GM12878 (cell line): ENCODE measurements at regions of chr7 and their contacts with region 1.

Region 1: DNA sequence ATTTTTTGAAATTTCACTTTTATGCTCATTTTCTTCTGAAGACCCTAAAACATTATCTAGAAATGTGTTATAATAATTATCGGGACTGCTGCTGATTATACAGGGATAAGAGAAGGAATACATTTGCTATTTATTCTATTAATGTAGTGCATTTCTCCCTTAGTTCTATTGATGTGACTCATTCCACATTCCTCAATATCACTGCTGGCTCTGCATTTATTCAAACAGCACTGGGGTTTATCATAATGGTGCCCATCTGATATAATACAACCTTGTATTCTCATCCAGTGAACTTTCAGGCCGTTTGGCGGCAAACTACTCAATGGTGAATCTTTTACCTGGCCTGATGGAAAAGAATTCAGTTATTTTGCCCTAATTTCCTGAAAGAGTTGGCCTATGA is 7.8 kb downstream of the KCND2 start:
- DNase-seq: no peak
- ATAC-seq: no peak
- H3K4me3 ChIP-seq: no peak overlapping the region
- H3K27ac ChIP-seq: no peak overlapping the region
- H3K4me1 ChIP-seq: no peaks in the 10 kb centered on the region
- H3K27me3 ChIP-seq: no peaks in the 10 kb centered on the region
- CTCF ChIP-seq: no peak
- EP300 ChIP-seq: no peak
- POLR2A ChIP-seq: no peak
- RAD21 ChIP-seq: no peak

Region 2: DNA sequence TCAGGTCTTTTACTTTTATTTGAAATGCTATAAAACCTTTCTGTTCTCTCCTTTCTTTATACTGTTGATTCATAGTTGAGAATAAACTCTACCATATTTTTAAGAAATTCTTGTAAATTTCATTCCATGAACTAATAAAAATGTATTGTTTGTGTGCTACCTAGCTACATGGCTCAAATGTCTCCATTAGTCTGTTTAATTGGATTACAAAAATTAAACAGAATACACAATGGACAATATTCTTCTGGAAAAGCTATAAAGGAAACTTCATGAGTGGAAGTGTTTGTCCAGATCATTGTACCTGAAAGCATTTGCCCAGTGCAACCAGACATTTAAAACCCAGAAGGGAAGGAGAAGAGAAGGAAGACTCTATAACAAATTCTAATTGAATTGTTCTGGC is 12.3 kb after region 1 on chr7:
- CTCF ChIA-PET with region 1: interaction called, 10 read pairs
- POLR2A ChIA-PET with region 1: interaction called, 3 read pairs
- RAD21 ChIA-PET with region 1: interaction called, 8 read pairs
- SMC1A ChIA-PET with region 1: interaction called, 9 read pairs
- in situ Hi-C with region 1: no loop called
- intact Hi-C with region 1: no loop called
- DNase-seq: no peak
- ATAC-seq: no peak
- H3K4me3 ChIP-seq: no peak overlapping the region
- H3K27ac ChIP-seq: no peak overlapping the region
- H3K4me1 ChIP-seq: no peaks in the 10 kb centered on the region
- H3K27me3 ChIP-seq: no peaks in the 10 kb centered on the region
- CTCF ChIP-seq: no peak
- EP300 ChIP-seq: no peak
- POLR2A ChIP-seq: no peak
- RAD21 ChIP-seq: no peak

Region 3: DNA sequence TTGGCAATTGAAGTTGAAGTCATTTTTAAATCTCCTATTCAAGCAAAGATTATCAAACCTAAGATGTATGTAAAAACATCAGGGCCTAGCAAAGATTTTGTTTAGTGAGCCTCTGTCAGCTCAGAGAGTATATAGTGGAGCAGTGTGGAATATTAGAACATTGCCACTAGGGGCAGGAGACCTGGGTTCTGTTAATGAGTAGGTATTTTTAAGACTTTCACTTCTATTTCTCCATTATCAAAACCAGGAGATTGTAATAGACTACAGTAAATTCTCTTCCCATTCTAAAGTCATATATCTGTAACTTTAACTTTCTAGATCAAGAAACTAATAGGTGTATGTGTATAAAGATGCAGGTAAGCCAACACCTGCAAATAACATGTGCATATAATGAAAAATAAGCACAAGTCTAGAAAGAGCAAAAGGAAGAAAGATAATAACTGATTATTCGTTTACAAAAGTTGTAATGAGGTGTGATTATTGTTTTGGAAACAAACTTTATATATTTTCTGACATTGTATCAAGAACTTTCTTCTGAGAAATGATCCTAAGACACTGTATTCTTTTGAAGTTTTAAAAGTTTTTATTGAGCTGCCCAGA is 56.7 kb after region 1 on chr7:
- CTCF ChIA-PET with region 1: interaction called, 3 read pairs
- POLR2A ChIA-PET with region 1: no interaction called
- RAD21 ChIA-PET with region 1: interaction called, 6 read pairs
- SMC1A ChIA-PET with region 1: interaction called, 3 read pairs
- in situ Hi-C with region 1: no loop called
- intact Hi-C with region 1: loop called (anchors 5 kb)
- DNase-seq: no peak
- ATAC-seq: peak; percentile 82
- H3K4me3 ChIP-seq: no peak overlapping the region
- H3K27ac ChIP-seq: no peak overlapping the region
- H3K4me1 ChIP-seq: peaks cover 5% of the 10 kb centered on the region; the same call in 1 of the 2 replicates
- H3K27me3 ChIP-seq: no peaks in the 10 kb centered on the region
- CTCF ChIP-seq: peak; percentile 42 to 49 (median 47)
- EP300 ChIP-seq: no peak
- POLR2A ChIP-seq: no peak
- RAD21 ChIP-seq: peak; percentile 37; the same call in 1 of the 2 replicates